ENCODE measurements at regions of chr1 and their contacts with region 1.

Region 1: GRCh38 chr1:61724813-61725694 is at the start of gene TM2D1:
- DNase-seq: peak; percentile 97
- H3K4me3 Mint-ChIP-seq: peak within 1 kb of the TSS; percentile 95
- H3K27ac Mint-ChIP-seq: peak within 1 kb of the TSS; percentile 98
- H3K4me1 Mint-ChIP-seq: peaks cover 11% of the 10 kb centered on the region
- H3K27me3 Mint-ChIP-seq: no peaks in the 10 kb centered on the region
- total RNA-seq, gene TM2D1: 29.8 and 32.9 TPM in 2 replicates

Region 2: DNA sequence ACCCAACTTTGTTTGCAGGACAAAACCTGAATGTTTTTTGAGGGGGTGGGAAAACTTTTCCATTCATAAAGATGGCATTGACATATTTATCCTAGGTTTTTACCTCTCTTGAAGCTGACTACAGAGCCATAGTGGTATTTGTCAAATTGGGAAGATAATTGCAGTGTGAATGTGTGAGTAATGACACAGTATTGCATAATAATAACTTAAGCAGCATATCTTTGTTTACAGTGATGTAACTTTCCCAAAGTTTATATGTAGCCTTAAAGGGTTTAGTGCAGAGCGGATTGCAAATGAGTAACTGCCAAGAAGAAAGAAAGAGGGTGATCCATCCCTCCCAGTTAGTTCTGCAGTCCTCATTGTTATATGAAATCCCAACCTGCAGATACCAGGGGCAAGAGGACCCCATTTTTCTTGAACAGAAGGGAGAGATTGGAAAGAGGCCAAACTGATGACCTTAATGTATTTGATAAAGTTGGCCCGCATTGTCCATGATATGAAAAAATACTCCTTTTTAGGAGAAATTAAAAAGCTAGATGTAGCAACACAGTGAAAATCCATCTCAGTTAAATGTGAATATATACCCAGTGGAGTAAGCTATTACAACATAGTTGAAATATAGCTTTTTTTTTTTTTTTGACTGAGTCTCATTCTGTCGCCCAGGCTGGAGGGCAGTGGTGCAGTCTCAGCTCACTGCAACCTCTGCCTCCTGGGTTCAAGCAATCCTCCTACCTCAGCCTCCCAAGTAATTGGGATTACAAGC is 666.4 kb before region 1 on chr1:
- intact Hi-C with region 1: no loop called
- DNase-seq: no peak
- H3K4me3 Mint-ChIP-seq: no peak overlapping the region
- H3K27ac Mint-ChIP-seq: no peak overlapping the region
- H3K4me1 Mint-ChIP-seq: peaks cover 11% of the 10 kb centered on the region
- H3K27me3 Mint-ChIP-seq: peaks cover 64% of the 10 kb centered on the region

Region 3: DNA sequence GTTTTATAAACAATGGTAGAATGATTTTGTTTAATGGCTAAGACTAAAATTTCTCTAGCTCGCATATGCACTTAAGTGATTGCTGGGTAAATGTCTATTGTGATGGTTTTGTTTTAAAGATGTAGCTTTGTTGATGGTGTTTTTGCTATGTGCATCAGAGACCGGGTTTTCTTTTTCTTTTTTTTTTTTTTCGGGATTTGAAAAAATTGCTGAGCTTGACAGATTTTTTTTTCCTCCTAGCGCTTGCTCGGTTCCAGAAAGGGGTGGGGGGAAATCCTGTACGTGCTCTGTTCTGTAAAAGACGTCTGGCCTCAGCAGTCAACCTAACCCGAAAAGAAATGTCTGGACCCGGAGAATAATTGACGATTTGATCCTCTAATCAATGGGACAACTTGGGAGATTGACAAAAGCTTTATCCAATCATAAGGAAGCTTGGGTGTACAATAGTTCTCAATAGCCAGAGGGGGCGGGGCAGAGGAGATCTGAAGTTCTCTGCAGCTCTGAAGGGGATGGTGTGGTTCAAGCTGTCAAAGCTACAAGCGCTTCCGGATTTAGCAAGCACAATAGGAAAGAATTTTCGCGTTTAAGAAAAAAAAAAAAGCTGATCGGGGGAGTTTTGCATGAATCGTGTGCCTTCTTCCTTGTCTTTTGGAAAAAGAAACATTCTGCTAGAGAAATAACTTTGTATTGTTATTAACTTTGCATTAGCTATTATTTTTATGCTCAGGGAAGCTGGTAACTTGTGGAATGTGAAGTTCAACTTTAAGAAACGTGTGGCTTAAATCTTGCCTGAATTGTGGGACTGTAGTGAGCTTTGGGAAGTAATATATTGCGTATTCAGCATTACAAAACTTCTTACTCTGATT is 647.1 kb before region 1 on chr1:
- intact Hi-C with region 1: loop called (anchors 10 kb)
- DNase-seq: peak; percentile 96
- H3K4me3 Mint-ChIP-seq: peak overlapping the region; percentile 92
- H3K27ac Mint-ChIP-seq: peak overlapping the region; percentile 86
- H3K4me1 Mint-ChIP-seq: peaks cover 39% of the 10 kb centered on the region
- H3K27me3 Mint-ChIP-seq: peaks cover 50% of the 10 kb centered on the region

Region 4: DNA sequence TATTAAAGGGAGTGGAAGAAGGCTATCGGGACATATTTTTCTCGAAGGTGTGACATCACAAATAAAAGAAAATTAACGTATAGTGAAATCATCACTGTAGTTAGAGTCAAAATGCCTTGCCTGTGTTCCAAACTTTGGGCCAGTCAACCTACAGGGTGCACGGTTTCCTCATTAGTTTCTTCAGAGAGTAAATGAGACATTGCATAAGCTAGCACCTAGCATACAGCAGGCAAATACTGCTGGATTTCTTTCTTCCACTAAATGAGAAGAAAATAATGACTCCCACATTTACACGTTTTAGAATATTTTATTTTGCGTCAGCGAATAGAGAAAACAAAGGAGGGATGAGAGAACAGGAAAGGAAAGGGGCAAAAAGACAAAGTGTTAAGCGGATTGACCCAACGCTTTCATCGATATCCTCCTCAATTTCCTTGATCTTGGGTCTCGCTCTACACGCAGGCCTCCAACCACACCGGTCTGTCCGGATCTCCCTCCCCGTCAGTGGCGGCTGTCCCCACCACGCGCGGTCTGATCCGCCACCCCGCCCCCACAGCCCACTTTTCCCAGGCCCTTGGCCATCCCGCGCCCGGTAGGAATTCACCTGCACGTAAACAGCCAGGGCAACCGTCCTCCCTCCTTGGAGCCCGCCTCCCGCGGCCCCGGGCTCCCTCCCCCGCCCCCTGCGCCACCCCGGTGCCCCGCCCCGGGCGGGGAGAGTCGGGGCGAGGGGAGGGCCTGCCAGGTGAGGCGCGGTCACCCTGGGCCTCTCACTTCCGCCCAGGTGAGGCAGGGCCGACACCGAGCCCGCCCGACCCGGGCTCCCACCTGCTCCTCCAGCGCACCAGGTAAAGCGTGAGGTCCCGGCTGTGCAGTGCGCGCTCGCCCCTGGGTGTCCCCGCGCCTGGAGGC is 16.9 kb after region 1 on chr1 and contains the start of gene PATJ:
- intact Hi-C with region 1: loop called (anchors 1 kb)
- DNase-seq: peak; percentile 89
- H3K4me3 Mint-ChIP-seq: peak within 1 kb of the TSS; percentile 93
- H3K27ac Mint-ChIP-seq: peak within 1 kb of the TSS; percentile 88
- H3K4me1 Mint-ChIP-seq: peaks cover 18% of the 10 kb centered on the region
- H3K27me3 Mint-ChIP-seq: no peaks in the 10 kb centered on the region
- total RNA-seq, gene PATJ: 5.0 and 5.1 TPM in 2 replicates

Region 5: GRCh38 chr1:61782771-61783170 is 57.7 kb after region 1 on chr1:
- intact Hi-C with region 1: loop called (anchors 1 kb)
- DNase-seq: peak; percentile 92
- H3K4me3 Mint-ChIP-seq: peak overlapping the region; percentile 64
- H3K27ac Mint-ChIP-seq: peak overlapping the region; percentile 68
- H3K4me1 Mint-ChIP-seq: peaks cover 35% of the 10 kb centered on the region
- H3K27me3 Mint-ChIP-seq: no peaks in the 10 kb centered on the region

Region 6: GRCh38 chr1:61808968-61809367 is 83.9 kb after region 1 on chr1:
- intact Hi-C with region 1: no loop called
- DNase-seq: no peak
- H3K4me3 Mint-ChIP-seq: no peak overlapping the region
- H3K27ac Mint-ChIP-seq: no peak overlapping the region
- H3K4me1 Mint-ChIP-seq: no peaks in the 10 kb centered on the region
- H3K27me3 Mint-ChIP-seq: no peaks in the 10 kb centered on the region

Region 7: GRCh38 chr1:61842871-61843514 is 117.9 kb after region 1 on chr1:
- intact Hi-C with region 1: loop called (anchors 5 kb)
- DNase-seq: peak; percentile 54
- H3K4me3 Mint-ChIP-seq: no peak overlapping the region
- H3K27ac Mint-ChIP-seq: no peak overlapping the region
- H3K4me1 Mint-ChIP-seq: peaks cover 2% of the 10 kb centered on the region
- H3K27me3 Mint-ChIP-seq: no peaks in the 10 kb centered on the region

Measured in activated CD4-positive, alpha-beta T cell treated with anti-CD3 and anti-CD28 coated beads, Interleukin-2, amount 10 ng/mL, durations not matched to agents 24 days and 14 days (primary cell).